Caco-2 (cell line): ENCODE measurements at regions of chr17 and their contacts with region 1.

Region 1: DNA sequence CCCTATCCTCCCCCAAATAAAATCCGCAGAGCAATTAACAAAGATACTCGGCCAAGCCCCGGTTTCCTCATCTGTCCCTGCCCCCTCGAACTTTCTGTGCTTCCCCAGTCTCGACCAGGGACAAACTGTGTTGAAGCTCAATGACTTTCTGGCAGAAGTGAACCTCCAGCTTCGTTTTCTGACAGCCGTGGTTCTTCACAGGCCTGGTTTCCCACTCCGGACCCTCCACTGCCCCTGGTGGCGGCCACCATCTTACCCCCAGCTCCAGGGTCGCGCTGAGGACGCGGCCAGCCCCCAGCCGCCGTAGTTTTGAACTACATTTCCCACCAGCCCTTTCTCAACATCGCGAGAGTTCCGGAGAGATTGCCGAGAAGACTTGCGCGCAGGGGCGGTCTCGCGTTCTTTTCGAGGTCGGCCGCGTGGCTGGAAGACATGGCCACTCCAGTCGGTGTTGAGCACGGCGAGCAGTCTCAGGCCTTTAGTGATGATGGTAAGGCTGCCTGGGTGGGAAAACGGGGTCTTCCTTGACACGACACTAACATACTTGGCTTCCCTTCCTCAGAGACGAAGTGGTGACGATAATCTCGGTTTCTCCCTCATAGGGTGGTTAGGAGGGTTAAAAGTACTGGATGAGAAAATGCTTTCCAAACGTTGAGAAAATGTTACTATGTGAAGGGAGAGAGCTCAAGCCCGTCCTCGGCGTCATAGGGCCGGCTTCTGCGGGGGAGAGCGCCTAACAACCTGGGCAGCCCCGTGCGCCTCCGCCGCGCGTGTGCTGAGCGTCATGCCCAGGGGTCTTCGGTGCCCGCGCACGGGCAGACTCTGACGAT is 17.7 kb downstream of the PRCD start:
- DNase-seq: peak; percentile 98 to 99
- H3K4me3 ChIP-seq: peak overlapping the region; percentile 77
- H3K4me3 Mint-ChIP-seq: peak overlapping the region; percentile 90
- H3K27ac Mint-ChIP-seq: peak overlapping the region; percentile 100
- H3K4me1 ChIP-seq: peaks cover 25% of the 10 kb centered on the region
- H3K4me1 Mint-ChIP-seq: peaks cover 12% of the 10 kb centered on the region
- H3K27me3 ChIP-seq: no peaks in the 10 kb centered on the region
- H3K27me3 Mint-ChIP-seq: no peaks in the 10 kb centered on the region
- CTCF ChIP-seq: peak; percentile 89 to 92

Region 2: GRCh38 chr17:75261336-75262111 is 1296.1 kb before region 1 on chr17 and contains the starts of genes GGA3 and MRPS7:
- CTCF ChIA-PET with region 1: no interaction called
- POLR2A ChIA-PET with region 1: interaction called, 19 read pairs
- intact Hi-C with region 1: no loop called
- DNase-seq: peak; percentile 95 to 97
- H3K4me3 ChIP-seq: peak within 1 kb of the TSS; percentile 89
- H3K4me3 Mint-ChIP-seq: peak within 1 kb of the TSS; percentile 97
- H3K27ac Mint-ChIP-seq: peak within 1 kb of the TSS; percentile 100
- H3K4me1 ChIP-seq: no peaks in the 10 kb centered on the region
- H3K4me1 Mint-ChIP-seq: peaks cover 28% of the 10 kb centered on the region
- H3K27me3 ChIP-seq: no peaks in the 10 kb centered on the region
- H3K27me3 Mint-ChIP-seq: no peaks in the 10 kb centered on the region
- CTCF ChIP-seq: no peak
- total RNA-seq, gene GGA3: 90.2 and 94.4 TPM in 2 replicates
- total RNA-seq, gene MRPS7: 123 and 125 TPM in 2 replicates

Region 3: GRCh38 chr17:76440751-76441362 is 116.7 kb before region 1 on chr17:
- CTCF ChIA-PET with region 1: no interaction called
- POLR2A ChIA-PET with region 1: no interaction called
- intact Hi-C with region 1: no loop called
- DNase-seq: no peak
- H3K4me3 ChIP-seq: no peak overlapping the region
- H3K4me3 Mint-ChIP-seq: no peak overlapping the region
- H3K27ac Mint-ChIP-seq: no peak overlapping the region
- H3K4me1 ChIP-seq: peaks cover 20% of the 10 kb centered on the region
- H3K4me1 Mint-ChIP-seq: peaks cover 40% of the 10 kb centered on the region
- H3K27me3 ChIP-seq: no peaks in the 10 kb centered on the region
- H3K27me3 Mint-ChIP-seq: no peaks in the 10 kb centered on the region
- CTCF ChIP-seq: no peak

Region 4: DNA sequence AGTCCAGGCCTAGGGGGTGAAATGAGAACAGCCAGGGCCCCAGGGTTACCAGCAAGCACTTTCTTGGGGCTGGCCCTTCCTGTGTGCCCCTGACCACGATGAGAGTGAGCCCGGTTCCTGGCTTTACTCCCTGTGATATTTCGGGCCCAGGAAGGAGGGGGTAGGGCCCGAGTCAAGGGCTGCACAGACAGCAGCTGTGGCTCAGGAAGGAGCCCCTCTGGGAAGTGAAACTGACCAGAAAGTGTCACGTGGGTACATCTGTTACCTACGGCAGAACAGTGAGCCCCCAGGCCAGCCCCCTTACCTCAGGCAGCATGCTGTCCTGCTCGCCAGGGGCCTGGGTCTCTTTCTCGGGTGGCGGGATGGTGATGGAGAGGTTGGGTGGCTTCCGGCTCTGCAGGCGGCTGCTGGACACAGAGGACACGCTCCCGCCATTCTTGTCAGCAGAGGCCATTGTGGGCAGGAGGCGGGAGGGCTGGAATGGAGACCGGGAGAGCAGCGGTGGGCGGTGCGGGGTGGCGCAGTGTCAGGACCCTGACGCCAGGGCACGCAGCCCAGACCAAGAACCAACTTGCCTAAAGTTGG is 76.4 kb before region 1 on chr17:
- CTCF ChIA-PET with region 1: no interaction called
- POLR2A ChIA-PET with region 1: no interaction called
- intact Hi-C with region 1: no loop called
- DNase-seq: no peak
- H3K4me3 ChIP-seq: no peak overlapping the region
- H3K4me3 Mint-ChIP-seq: no peak overlapping the region
- H3K27ac Mint-ChIP-seq: no peak overlapping the region
- H3K4me1 ChIP-seq: no peaks in the 10 kb centered on the region
- H3K4me1 Mint-ChIP-seq: peaks cover 12% of the 10 kb centered on the region
- H3K27me3 ChIP-seq: no peaks in the 10 kb centered on the region
- H3K27me3 Mint-ChIP-seq: no peaks in the 10 kb centered on the region
- CTCF ChIP-seq: no peak

Region 5: DNA sequence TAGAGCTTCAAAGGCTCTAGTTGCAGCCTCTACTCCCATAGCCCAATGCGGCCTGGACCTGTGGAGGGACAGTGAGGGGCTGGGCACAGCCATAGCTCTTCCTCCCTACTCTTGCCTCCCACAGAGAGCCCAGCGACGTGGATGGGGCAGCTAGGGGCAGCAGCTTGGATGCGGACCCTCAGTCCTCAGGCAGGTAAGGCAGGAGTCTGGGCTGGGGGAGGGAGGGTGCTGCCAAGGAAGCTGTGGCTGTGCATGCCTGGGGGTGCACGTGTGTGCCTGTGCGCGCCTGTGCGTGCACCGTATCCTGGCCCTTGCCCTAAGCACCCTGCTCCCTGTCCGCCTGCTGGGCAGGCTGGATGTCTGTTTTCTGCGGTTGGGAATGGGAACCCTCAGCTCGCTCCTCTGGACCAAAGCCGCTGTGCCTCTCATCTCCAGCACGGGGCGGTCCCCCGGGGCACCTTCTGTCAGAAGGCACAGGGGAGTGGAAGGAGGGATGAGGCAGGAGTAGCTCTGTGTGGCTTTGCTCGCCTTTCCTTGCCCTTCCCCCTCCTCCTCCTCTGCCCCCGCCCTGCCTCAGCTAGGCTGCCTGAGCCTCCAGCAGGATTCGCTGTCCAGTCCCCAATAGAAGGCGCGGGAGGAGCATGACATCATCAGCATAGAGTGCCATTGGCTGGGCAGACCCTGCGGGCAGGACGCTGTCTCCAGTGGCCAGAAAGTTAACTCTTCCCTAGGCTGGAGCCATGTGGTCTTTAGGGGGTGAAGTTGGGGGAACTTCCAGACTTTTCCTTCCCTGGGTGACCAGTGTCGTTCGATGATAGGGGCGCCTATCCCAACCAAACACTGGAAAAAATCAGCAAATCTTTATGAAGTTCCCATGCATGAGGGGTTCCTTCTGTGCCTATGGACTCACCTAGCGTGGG is 16.9 kb before region 1 on chr17:
- CTCF ChIA-PET with region 1: interaction called, 21 read pairs
- POLR2A ChIA-PET with region 1: interaction called, 9 read pairs
- intact Hi-C with region 1: no loop called
- DNase-seq: peak; percentile 94 to 97
- H3K4me3 ChIP-seq: peak overlapping the region; percentile 30
- H3K4me3 Mint-ChIP-seq: peak overlapping the region; percentile 73
- H3K27ac Mint-ChIP-seq: peak overlapping the region; percentile 44
- H3K4me1 ChIP-seq: peaks cover 9% of the 10 kb centered on the region
- H3K4me1 Mint-ChIP-seq: peaks cover 8% of the 10 kb centered on the region
- H3K27me3 ChIP-seq: no peaks in the 10 kb centered on the region
- H3K27me3 Mint-ChIP-seq: no peaks in the 10 kb centered on the region
- CTCF ChIP-seq: peak; percentile 14 to 49

Region 6: GRCh38 chr17:76574166-76574565 is 16.6 kb after region 1 on chr17:
- CTCF ChIA-PET with region 1: no interaction called
- POLR2A ChIA-PET with region 1: no interaction called
- intact Hi-C with region 1: no loop called
- DNase-seq: no peak
- H3K4me3 ChIP-seq: no peak overlapping the region
- H3K4me3 Mint-ChIP-seq: no peak overlapping the region
- H3K27ac Mint-ChIP-seq: peak overlapping the region; percentile 53
- H3K4me1 ChIP-seq: peaks cover 17% of the 10 kb centered on the region
- H3K4me1 Mint-ChIP-seq: no peaks in the 10 kb centered on the region
- H3K27me3 ChIP-seq: no peaks in the 10 kb centered on the region
- H3K27me3 Mint-ChIP-seq: no peaks in the 10 kb centered on the region
- CTCF ChIP-seq: no peak

Region 7: DNA sequence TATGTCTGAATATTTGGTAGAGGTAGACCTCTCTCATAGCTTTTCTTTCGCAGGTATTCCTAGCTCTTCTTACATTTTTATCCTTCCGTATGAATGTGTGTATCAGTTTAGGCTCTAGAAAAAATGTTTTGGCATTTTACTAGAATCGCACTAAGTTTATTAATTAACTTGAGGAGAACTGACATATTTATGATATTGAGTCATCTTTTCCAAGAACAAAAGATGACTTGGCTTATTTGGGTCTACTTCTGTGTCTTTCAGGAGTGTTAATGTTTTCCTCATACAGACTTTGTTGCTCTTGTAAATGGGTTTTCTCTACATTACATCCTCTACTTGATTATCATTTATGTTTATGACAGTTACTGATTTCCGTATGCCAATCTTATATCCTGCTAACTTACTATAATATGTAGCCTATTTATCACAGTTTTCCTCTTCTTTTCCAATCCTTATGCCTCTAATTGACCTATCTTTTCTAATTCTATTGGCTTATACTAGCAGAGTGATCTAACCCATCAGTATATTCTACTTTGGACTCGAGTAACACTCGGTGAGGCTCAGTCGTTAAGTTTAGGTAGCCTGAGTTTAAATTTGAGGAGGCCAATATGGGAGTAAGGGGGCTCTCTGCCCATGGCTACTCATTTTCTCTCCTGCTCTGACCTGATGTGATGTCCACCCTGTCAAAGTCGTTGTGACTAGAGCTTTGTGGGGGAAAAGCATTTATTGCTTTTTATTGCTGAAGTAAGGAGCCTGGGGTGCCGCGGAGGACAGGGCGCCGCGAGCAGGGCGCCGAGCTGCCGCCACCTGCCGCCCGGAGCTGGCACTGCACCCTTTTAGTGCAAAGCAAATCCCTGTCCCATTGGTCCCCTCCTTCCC is 65.9 kb after region 1 on chr17:
- CTCF ChIA-PET with region 1: interaction called, 19 read pairs
- POLR2A ChIA-PET with region 1: interaction called, 3 read pairs
- intact Hi-C with region 1: loop called (anchors 1 kb)
- DNase-seq: peak; percentile 72 to 88
- H3K4me3 ChIP-seq: no peak overlapping the region
- H3K4me3 Mint-ChIP-seq: peak overlapping the region; percentile 48
- H3K27ac Mint-ChIP-seq: no peak overlapping the region
- H3K4me1 ChIP-seq: peaks cover 9% of the 10 kb centered on the region; the same call in 1 of the 2 replicates
- H3K4me1 Mint-ChIP-seq: peaks cover 10% of the 10 kb centered on the region
- H3K27me3 ChIP-seq: no peaks in the 10 kb centered on the region
- H3K27me3 Mint-ChIP-seq: no peaks in the 10 kb centered on the region
- CTCF ChIP-seq: peak; percentile 96 to 98

Region 8: GRCh38 chr17:76671123-76671911 is 113.7 kb after region 1 on chr17:
- CTCF ChIA-PET with region 1: interaction called, 15 read pairs
- POLR2A ChIA-PET with region 1: interaction called, 13 read pairs
- intact Hi-C with region 1: loop called (anchors 1 kb)
- DNase-seq: peak; percentile 100
- H3K4me3 ChIP-seq: peak overlapping the region; percentile 43
- H3K4me3 Mint-ChIP-seq: peak overlapping the region; percentile 85
- H3K27ac Mint-ChIP-seq: peak overlapping the region; percentile 94
- H3K4me1 ChIP-seq: peaks cover 20% of the 10 kb centered on the region
- H3K4me1 Mint-ChIP-seq: peaks cover 42% of the 10 kb centered on the region
- H3K27me3 ChIP-seq: no peaks in the 10 kb centered on the region
- H3K27me3 Mint-ChIP-seq: no peaks in the 10 kb centered on the region
- CTCF ChIP-seq: no peak

Region 9: DNA sequence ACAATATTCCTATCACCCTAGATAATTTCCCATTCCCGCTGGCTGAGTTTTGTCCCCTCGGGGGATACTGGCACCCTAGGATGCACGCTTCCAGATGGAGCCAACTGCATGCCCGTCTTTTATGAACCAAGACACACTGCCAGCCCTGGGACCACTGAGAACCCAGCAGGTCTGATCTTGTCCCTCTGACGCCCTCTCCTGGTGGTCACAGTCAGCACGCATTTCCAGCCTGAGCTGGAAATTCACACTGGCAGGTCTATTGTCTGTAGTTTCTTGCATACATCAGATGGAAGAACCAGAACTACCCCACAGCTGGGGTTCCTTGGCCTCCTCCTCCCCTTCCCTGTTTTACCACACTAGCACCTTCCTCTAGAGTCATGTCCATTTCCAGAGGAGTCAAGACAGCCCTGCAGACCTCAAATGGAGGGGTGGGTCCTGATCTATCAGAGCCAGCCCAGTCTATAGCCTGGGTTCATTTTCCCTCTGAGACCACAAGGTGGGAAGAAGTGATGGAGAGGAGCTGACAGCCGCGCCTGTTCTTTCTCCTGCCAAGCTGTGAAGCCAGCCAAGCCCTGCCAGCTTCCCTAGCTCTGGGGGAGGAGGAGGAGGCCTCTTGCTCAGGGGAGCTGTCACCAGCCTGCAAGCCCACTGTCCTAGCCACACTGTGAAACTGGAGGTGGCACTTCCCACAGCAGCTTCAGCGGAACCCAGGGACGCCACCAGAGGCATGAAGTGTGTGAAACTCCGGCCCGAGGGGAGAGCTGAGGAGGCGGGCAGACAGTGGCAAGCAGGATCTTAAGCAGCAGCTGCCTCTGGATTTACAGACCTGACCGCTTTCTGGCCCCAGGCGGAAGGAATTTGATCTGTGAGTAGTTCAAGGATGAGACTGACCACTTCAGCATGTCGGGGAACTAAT is 123.9 kb after region 1 on chr17:
- CTCF ChIA-PET with region 1: interaction called, 14 read pairs
- POLR2A ChIA-PET with region 1: interaction called, 3 read pairs
- intact Hi-C with region 1: no loop called
- DNase-seq: peak; percentile 80
- H3K4me3 ChIP-seq: no peak overlapping the region
- H3K4me3 Mint-ChIP-seq: no peak overlapping the region
- H3K27ac Mint-ChIP-seq: no peak overlapping the region
- H3K4me1 ChIP-seq: peaks cover 14% of the 10 kb centered on the region
- H3K4me1 Mint-ChIP-seq: no peaks in the 10 kb centered on the region
- H3K27me3 ChIP-seq: no peaks in the 10 kb centered on the region
- H3K27me3 Mint-ChIP-seq: no peaks in the 10 kb centered on the region
- CTCF ChIP-seq: peak; percentile 87 to 91

Region 10: GRCh38 chr17:76714822-76715495 is 157.4 kb after region 1 on chr17:
- CTCF ChIA-PET with region 1: interaction called, 3 read pairs
- POLR2A ChIA-PET with region 1: interaction called, 4 read pairs
- intact Hi-C with region 1: loop called (anchors 2 kb)
- DNase-seq: peak; percentile 66 to 84
- H3K4me3 ChIP-seq: no peak overlapping the region
- H3K4me3 Mint-ChIP-seq: no peak overlapping the region
- H3K27ac Mint-ChIP-seq: no peak overlapping the region
- H3K4me1 ChIP-seq: peaks cover 5% of the 10 kb centered on the region; the same call in 1 of the 2 replicates
- H3K4me1 Mint-ChIP-seq: peaks cover 13% of the 10 kb centered on the region
- H3K27me3 ChIP-seq: no peaks in the 10 kb centered on the region
- H3K27me3 Mint-ChIP-seq: no peaks in the 10 kb centered on the region
- CTCF ChIP-seq: peak; percentile 82 to 89